Activated B cell treated with CpG ODN at 0.5 μM for 24 hours (primary cell): ENCODE measurements at regions of chr1 and their contacts with region 1.

Region 1: DNA sequence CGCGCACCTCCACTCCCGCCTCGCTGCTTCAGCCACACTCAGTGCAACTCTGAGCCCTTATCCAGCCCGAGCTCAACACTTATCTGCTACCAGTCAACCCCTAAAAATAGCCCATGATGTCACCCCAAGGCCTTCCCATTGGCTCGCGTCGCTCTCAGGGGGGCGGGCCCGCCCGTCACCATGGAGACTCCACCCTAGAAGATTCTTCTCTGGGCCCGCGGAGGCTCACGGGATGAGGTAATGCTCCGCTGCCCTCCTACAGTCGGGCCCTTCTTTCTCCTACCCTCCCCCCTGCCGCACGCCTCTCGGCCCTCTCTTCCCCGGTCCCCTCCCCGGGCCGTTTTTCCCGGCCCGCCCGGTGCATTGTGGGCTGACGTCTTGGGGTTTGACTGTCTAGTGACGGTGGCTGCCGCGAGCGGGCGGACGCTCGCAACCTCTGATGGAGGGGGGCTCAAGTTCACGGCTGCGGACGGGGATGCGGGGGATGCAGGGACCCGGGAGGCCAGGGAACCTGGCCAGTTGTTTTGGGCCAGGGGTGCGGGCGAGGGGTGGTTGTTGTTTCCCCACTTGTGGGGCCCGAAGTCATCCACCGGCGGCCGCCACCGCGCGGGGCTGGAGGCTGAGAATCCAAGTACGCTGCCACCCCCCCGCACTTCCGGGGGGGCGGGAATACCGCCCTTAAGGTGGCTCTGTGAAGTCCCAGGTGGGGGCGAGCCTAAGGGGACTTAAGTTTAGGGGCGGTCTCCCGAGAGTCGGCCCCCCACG is at the start of gene JUN:
- DNase-seq: peak; percentile 93
- ATAC-seq: peak; percentile 72
- H3K4me3 Mint-ChIP-seq: peak within 1 kb of the TSS; percentile 96
- H3K27ac Mint-ChIP-seq: peak within 1 kb of the TSS; percentile 99
- H3K4me1 Mint-ChIP-seq: peaks cover 38% of the 10 kb centered on the region
- H3K27me3 Mint-ChIP-seq: no peaks in the 10 kb centered on the region
- CTCF ChIP-seq: no peak
- total RNA-seq, gene JUN: 35.3 and 36.6 TPM in 2 replicates

Region 2: DNA sequence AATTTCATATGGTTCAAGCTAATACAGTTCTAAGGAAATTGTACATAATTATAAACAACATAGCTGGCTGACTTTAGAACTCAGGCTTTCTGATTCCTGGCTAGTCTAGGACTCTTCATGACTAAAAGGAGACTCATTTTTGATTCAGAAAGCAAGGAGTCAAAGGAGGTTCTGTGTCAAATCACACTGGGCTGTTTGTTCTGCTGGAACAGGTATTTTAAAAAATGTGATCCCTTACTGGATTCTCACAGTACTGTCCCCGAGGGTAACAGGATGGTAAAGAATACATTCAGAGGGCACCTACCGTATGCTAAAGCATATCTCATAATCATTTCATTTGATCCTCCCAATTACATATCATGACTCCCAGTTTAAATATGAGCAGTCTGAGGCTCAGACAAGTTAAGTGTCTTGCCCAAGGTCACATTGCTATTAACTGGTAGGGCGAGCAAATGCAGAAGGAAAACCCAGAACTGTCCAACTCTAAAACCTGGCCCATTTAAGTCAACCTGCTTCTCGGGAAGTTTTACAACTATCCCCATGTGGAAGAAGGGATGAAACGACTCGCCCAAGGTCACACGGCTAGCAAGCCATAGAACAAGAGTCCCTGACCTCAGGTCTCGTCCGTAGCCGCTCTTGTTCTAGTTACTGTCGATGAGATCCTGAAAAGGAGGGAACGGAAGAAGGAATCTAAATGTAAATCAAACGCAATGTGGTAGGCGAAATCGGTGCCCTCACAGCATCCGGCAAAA is 85.0 kb before region 1 on chr1:
- CTCF ChIA-PET with region 1: no interaction called
- POLR2A ChIA-PET with region 1: interaction called, 7 read pairs
- intact Hi-C with region 1: loop called (anchors 1 kb)
- DNase-seq: no peak
- ATAC-seq: no peak
- H3K4me3 Mint-ChIP-seq: peak overlapping the region; percentile 99
- H3K27ac Mint-ChIP-seq: peak overlapping the region; percentile 94
- H3K4me1 Mint-ChIP-seq: peaks cover 15% of the 10 kb centered on the region
- H3K27me3 Mint-ChIP-seq: no peaks in the 10 kb centered on the region
- CTCF ChIP-seq: no peak

Region 3: DNA sequence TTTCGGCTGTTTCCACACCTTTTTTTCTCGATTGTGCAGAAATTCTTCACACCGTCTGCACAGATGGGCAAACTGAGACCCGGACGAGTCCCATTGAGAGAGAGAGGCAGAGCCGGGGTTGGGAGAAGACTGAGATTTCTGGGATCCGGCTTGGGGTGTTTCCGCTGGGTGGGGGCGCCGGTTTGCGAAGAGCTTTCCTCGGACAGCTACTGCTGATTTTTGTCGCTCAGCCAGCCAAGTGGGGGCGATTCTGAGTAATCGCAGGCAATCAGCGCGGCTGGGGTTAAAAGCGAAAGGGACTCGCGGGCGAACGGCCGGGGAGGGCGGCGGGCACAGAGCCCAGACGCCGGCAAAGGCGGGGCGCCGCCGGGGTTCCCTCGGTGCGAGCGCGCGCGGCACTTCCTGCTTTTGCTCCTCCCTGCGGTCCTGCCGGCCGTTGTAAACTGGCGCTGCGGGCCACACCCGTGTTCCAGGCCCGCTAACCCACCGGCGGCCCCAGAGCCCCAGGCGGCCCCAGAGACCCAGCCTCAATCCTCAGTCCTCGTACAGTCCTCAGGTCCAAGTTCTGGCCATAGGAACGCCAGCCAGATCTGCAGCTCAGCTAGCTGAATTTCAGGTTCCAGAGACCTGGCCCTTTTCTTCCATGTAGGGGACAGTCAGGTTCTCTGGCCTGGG is 32.0 kb after region 1 on chr1:
- CTCF ChIA-PET with region 1: interaction called, 6 read pairs
- POLR2A ChIA-PET with region 1: interaction called, 47 read pairs
- intact Hi-C with region 1: loop called (anchors 1 kb)
- DNase-seq: peak; percentile 85
- ATAC-seq: peak; percentile 91
- H3K4me3 Mint-ChIP-seq: peak overlapping the region; percentile 93
- H3K27ac Mint-ChIP-seq: peak overlapping the region; percentile 92
- H3K4me1 Mint-ChIP-seq: peaks cover 46% of the 10 kb centered on the region
- H3K27me3 Mint-ChIP-seq: no peaks in the 10 kb centered on the region
- CTCF ChIP-seq: no peak

Region 4: GRCh38 chr1:59007820-59008598 is 223.8 kb after region 1 on chr1:
- CTCF ChIA-PET with region 1: no interaction called
- POLR2A ChIA-PET with region 1: interaction called, 41 read pairs
- intact Hi-C with region 1: loop called (anchors 1 kb)
- DNase-seq: no peak
- ATAC-seq: peak; percentile 76
- H3K4me3 Mint-ChIP-seq: peak overlapping the region; percentile 62
- H3K27ac Mint-ChIP-seq: peak overlapping the region; percentile 90
- H3K4me1 Mint-ChIP-seq: peaks cover 82% of the 10 kb centered on the region
- H3K27me3 Mint-ChIP-seq: no peaks in the 10 kb centered on the region
- CTCF ChIP-seq: no peak

Region 5: GRCh38 chr1:59146651-59147358 is 362.6 kb after region 1 on chr1:
- CTCF ChIA-PET with region 1: no interaction called
- POLR2A ChIA-PET with region 1: interaction called, 5 read pairs
- intact Hi-C with region 1: loop called (anchors 1 kb)
- DNase-seq: peak; percentile 64
- ATAC-seq: peak; percentile 84
- H3K4me3 Mint-ChIP-seq: peak overlapping the region; percentile 85
- H3K27ac Mint-ChIP-seq: peak overlapping the region; percentile 82
- H3K4me1 Mint-ChIP-seq: peaks cover 46% of the 10 kb centered on the region
- H3K27me3 Mint-ChIP-seq: no peaks in the 10 kb centered on the region
- CTCF ChIP-seq: no peak

Region 6: GRCh38 chr1:59432531-59433439 is 648.6 kb after region 1 on chr1:
- CTCF ChIA-PET with region 1: no interaction called
- POLR2A ChIA-PET with region 1: no interaction called
- intact Hi-C with region 1: loop called (anchors 1 kb)
- DNase-seq: no peak
- ATAC-seq: peak; percentile 74
- H3K4me3 Mint-ChIP-seq: peak overlapping the region; percentile 9
- H3K27ac Mint-ChIP-seq: peak overlapping the region; percentile 77
- H3K4me1 Mint-ChIP-seq: peaks cover 21% of the 10 kb centered on the region
- H3K27me3 Mint-ChIP-seq: no peaks in the 10 kb centered on the region
- CTCF ChIP-seq: no peak